ENCODE measurements at regions of chr17 and their contacts with region 1.

Region 1: DNA sequence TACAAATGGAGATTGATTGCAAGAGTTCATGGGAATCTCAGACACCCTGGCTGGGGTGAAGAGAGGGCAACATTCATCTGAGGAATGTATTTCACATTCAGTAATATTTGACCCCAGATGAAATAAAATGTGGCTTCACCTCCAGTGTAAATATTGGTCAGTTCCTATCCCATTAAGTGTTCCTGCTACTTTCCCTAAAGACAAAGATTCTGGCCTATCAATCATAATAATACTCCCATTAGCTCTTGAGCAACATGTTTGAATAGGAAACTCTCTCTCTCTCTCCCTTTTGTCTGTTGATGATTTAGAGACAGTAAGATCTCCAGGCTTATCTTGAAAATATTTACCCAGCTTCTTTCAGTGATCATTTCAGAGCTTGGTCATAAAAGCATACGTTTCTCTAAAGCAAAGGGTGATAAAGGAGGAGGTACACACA is 70.1 kb downstream of the KCNJ2 start:
- DNase-seq: no peak
- ATAC-seq: no peak
- H3K4me3 ChIP-seq: no peak overlapping the region
- H3K27ac ChIP-seq: no peak overlapping the region
- H3K4me1 ChIP-seq: no peaks in the 10 kb centered on the region
- H3K27me3 ChIP-seq: no peaks in the 10 kb centered on the region
- CTCF ChIP-seq: no peak

Region 2: DNA sequence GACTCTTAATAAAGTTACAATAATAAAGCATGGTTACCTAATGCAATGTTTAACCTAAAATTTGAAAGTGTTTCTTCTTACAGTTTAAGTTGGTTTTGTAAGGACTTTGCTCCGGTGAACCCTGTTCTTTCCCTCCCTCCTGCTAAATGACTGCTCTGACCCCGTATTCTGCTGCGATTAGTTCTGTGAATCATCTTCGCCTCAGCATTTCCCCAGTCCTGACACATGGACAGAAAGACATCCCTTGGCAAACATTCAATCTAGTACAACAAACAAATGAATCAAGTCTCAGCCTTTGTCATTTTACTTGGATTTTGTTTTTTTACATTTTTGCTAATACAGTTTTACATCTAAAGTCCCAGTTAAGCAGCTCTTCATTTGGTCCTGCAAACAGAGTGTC is 54.6 kb before region 1 on chr17:
- intact Hi-C with region 1: loop called in 1 of 10 experiments (anchors 5 kb)
- DNase-seq: no peak
- ATAC-seq: peak in 2 of 8 donors; percentile 35 to 51
- H3K4me3 ChIP-seq: no peak overlapping the region
- H3K27ac ChIP-seq: no peak overlapping the region
- H3K4me1 ChIP-seq: peaks cover 0 to 32% (median 9%) of the 10 kb centered on the region in 9 donors
- H3K27me3 ChIP-seq: no peaks in the 10 kb centered on the region
- CTCF ChIP-seq: no peak

Measured in heart right ventricle (tissue), 16 donors.